CD8-positive, alpha-beta T cell (primary cell): ENCODE measurements at regions of chr22 and their contacts with region 1.

Region 1: GRCh38 chr22:19109198-19110067 is 12.8 kb downstream of the DGCR2 start:
- DNase-seq: peak; percentile 18 to 87 (median 59)
- ATAC-seq: peak; percentile 83
- H3K4me3 ChIP-seq: peak overlapping the region; percentile 33 to 54
- H3K4me3 Mint-ChIP-seq: peak overlapping the region; percentile 81
- H3K27ac ChIP-seq: peak overlapping the region; percentile 70 to 87
- H3K27ac Mint-ChIP-seq: peak overlapping the region; percentile 97
- H3K4me1 ChIP-seq: peaks cover 60% of the 10 kb centered on the region
- H3K4me1 Mint-ChIP-seq: peaks cover 74% of the 10 kb centered on the region
- H3K27me3 ChIP-seq: no peaks in the 10 kb centered on the region
- H3K27me3 Mint-ChIP-seq: no peaks in the 10 kb centered on the region
- CTCF ChIP-seq: no peak

Region 2: DNA sequence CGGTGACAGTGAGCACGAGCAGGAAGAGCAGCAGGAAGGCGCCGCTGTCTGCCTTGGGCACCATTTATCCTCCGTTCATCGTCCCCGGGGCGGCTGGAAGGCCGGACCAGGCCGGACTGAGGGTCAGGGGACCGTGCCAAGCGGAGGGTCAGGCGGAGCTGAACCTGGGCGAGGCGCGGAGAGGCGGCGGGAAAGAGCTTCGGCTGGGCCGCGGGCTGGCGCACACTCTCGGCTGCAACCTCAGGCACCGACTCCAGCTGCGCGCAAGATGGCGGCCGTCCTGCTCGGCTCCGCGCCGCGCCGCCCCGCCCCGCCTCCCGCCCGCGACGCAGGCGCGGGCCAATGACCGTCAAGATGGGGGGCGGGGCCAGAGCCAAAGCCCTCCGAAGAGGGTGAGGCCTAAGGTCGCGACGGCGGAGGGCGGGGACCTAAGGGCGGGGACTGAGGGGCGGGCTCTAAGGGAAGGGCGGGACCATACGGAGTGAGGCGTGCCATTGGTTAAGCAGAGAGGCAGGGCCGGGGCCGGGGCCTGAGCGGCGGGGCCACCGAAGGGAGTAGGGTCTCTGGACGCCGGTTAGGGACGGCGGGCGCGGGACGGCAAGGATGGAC is 12.8 kb after region 1 on chr22 and contains the start of gene DGCR2:
- CTCF ChIA-PET with region 1: interaction called, 10 read pairs
- POLR2A ChIA-PET with region 1: interaction called, 28 read pairs
- intact Hi-C with region 1: loop called (anchors 1 kb)
- DNase-seq: peak; percentile 93 to 98 (median 97)
- ATAC-seq: peak; percentile 98
- H3K4me3 ChIP-seq: peak within 1 kb of the TSS; percentile 73 to 78
- H3K4me3 Mint-ChIP-seq: peak within 1 kb of the TSS; percentile 89
- H3K27ac ChIP-seq: peak within 1 kb of the TSS; percentile 75 to 88
- H3K27ac Mint-ChIP-seq: peak within 1 kb of the TSS; percentile 90
- H3K4me1 ChIP-seq: peaks cover 49% of the 10 kb centered on the region
- H3K4me1 Mint-ChIP-seq: peaks cover 47% of the 10 kb centered on the region
- H3K27me3 ChIP-seq: no peaks in the 10 kb centered on the region
- H3K27me3 Mint-ChIP-seq: no peaks in the 10 kb centered on the region
- CTCF ChIP-seq: no peak
- total RNA-seq, gene DGCR2: 29.6 to 32.4 TPM

Region 3: DNA sequence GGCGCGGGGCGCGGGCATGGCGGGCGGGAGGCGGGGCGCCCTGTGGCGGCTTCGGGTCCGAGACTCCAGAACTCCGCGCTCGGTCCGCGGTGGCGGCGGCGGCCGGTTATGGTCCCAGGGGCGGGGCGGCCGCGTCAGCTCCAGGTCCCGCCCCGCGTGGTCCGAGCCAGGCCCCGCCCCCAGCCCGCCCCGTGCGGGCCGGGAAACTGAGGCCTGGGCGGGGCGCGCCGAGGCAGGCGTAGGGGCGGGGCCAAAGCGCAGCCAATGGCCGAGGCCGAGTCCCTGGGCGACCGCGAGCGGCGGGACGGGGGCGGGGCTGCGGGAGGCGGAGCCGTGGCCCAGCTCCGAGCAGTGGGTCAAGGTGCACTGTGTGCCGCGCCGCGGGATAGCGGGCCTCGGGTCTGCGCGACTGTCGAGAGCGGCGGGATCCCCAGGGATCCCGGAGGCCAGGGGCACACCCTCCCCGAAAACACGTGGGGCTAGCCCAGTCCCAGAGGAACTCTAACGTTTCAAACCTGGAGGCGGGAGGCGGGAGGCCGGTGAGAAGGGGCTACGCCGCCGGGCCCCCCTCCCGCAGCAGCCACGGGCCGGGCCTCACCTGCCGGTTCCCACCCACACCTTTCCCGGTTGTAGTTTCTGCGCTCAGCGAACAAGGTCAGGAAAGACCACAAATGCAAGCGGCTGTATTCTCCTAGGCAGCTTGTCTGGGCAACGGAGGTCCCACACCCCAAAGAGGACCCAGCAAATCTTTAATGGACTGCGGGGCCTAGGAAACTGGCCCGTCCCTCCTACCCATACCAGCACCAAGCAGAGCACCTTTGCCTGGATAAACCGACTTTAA is 69.4 kb after region 1 on chr22 and contains the start of gene SLC25A1:
- CTCF ChIA-PET with region 1: no interaction called
- POLR2A ChIA-PET with region 1: interaction called, 3 read pairs
- intact Hi-C with region 1: loop called in 1 of 2 experiments (anchors 1 kb)
- DNase-seq: peak in 8 of 9 experiments; percentile 54 to 87 (median 78)
- ATAC-seq: peak; percentile 67
- H3K4me3 ChIP-seq: peak within 1 kb of the TSS; percentile 68 to 74
- H3K4me3 Mint-ChIP-seq: peak within 1 kb of the TSS; percentile 84
- H3K27ac ChIP-seq: peak within 1 kb of the TSS; percentile 42 to 65
- H3K27ac Mint-ChIP-seq: peak within 1 kb of the TSS; percentile 84
- H3K4me1 ChIP-seq: peaks cover 24% of the 10 kb centered on the region
- H3K4me1 Mint-ChIP-seq: peaks cover 22% of the 10 kb centered on the region
- H3K27me3 ChIP-seq: no peaks in the 10 kb centered on the region
- H3K27me3 Mint-ChIP-seq: no peaks in the 10 kb centered on the region
- CTCF ChIP-seq: no peak
- total RNA-seq, gene SLC25A1: 14.5 to 15.9 TPM

Region 4: GRCh38 chr22:19361501-19362103 is 252.2 kb after region 1 on chr22:
- CTCF ChIA-PET with region 1: no interaction called
- POLR2A ChIA-PET with region 1: no interaction called
- intact Hi-C with region 1: loop called in 1 of 2 experiments (anchors 5 kb)
- DNase-seq: peak in 1 of 9 experiments; percentile 29
- ATAC-seq: peak; percentile 31
- H3K4me3 ChIP-seq: no peak overlapping the region
- H3K4me3 Mint-ChIP-seq: no peak overlapping the region
- H3K27ac ChIP-seq: no peak overlapping the region
- H3K27ac Mint-ChIP-seq: no peak overlapping the region
- H3K4me1 ChIP-seq: no peaks in the 10 kb centered on the region
- H3K4me1 Mint-ChIP-seq: no peaks in the 10 kb centered on the region
- H3K27me3 ChIP-seq: no peaks in the 10 kb centered on the region
- H3K27me3 Mint-ChIP-seq: no peaks in the 10 kb centered on the region
- CTCF ChIP-seq: no peak

Region 5: GRCh38 chr22:19629720-19630419 is 520.4 kb after region 1 on chr22:
- CTCF ChIA-PET with region 1: interaction called, 8 read pairs
- POLR2A ChIA-PET with region 1: no interaction called
- intact Hi-C with region 1: loop called in 1 of 2 experiments (anchors 1 kb)
- DNase-seq: peak; percentile 74 to 92 (median 84)
- ATAC-seq: peak; percentile 94
- H3K4me3 ChIP-seq: no peak overlapping the region
- H3K4me3 Mint-ChIP-seq: no peak overlapping the region
- H3K27ac ChIP-seq: no peak overlapping the region
- H3K27ac Mint-ChIP-seq: no peak overlapping the region
- H3K4me1 ChIP-seq: peaks cover 3% of the 10 kb centered on the region
- H3K4me1 Mint-ChIP-seq: peaks cover 3% of the 10 kb centered on the region
- H3K27me3 ChIP-seq: no peaks in the 10 kb centered on the region
- H3K27me3 Mint-ChIP-seq: peaks cover 1% of the 10 kb centered on the region
- CTCF ChIP-seq: peak; percentile 78

Region 6: GRCh38 chr22:19717691-19718455 is 608.4 kb after region 1 on chr22:
- CTCF ChIA-PET with region 1: no interaction called
- POLR2A ChIA-PET with region 1: no interaction called
- intact Hi-C with region 1: loop called in 1 of 2 experiments (anchors 1 kb)
- DNase-seq: peak; percentile 71 to 90 (median 78)
- ATAC-seq: peak; percentile 95
- H3K4me3 ChIP-seq: peak overlapping the region; percentile 29 to 46
- H3K4me3 Mint-ChIP-seq: peak overlapping the region; percentile 65
- H3K27ac ChIP-seq: no peak overlapping the region
- H3K27ac Mint-ChIP-seq: no peak overlapping the region
- H3K4me1 ChIP-seq: peaks cover 29% of the 10 kb centered on the region
- H3K4me1 Mint-ChIP-seq: peaks cover 12% of the 10 kb centered on the region
- H3K27me3 ChIP-seq: peaks cover 17 to 20% of the 10 kb centered on the region in 2 experiments
- H3K27me3 Mint-ChIP-seq: peaks cover 36% of the 10 kb centered on the region
- CTCF ChIP-seq: peak; percentile 97